Right cardiac atrium (tissue), 5 donors: ENCODE measurements at regions of chr14 and their contacts with region 1.

Region 1: GRCh38 chr14:23446291-23446851 is 10.9 kb upstream of the MYH7 start:
- DNase-seq: peak in 2 of 3 donors; percentile 70 to 80
- ATAC-seq: peak; percentile 54 to 68
- H3K4me3 ChIP-seq: no peak overlapping the region
- H3K27ac ChIP-seq: peak overlapping the region; percentile 69
- H3K4me1 ChIP-seq: peaks cover 2% of the 10 kb centered on the region
- H3K27me3 ChIP-seq: no peaks in the 10 kb centered on the region

Region 2: DNA sequence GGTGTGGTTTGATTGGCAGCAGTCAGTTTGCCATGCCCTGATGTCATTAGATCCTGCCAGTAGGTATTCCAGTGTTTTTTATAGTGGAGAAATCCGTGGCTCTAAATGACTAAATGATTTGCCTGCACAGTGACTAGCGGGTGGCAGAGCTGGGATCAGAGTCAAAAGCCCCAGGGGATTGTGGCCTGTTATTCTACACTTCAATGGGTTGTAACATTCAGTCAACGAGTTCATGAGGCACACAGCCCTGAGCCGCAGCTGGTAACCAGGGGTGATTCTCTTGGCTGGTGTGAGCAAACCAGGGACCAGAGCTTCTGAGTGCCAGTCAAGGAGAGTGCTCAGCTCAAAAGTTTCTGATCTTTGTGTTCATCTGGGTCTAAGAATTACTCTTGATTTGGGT is 40.1 kb before region 1 on chr14:
- intact Hi-C with region 1: loop called in 2 of 4 experiments (anchors 2 to 5 kb)
- DNase-seq: peak in 1 of 3 donors; percentile 31
- ATAC-seq: no peak
- H3K4me3 ChIP-seq: peak overlapping the region; percentile 37
- H3K27ac ChIP-seq: peak overlapping the region; percentile 85
- H3K4me1 ChIP-seq: no peaks in the 10 kb centered on the region
- H3K27me3 ChIP-seq: no peaks in the 10 kb centered on the region

Region 3: DNA sequence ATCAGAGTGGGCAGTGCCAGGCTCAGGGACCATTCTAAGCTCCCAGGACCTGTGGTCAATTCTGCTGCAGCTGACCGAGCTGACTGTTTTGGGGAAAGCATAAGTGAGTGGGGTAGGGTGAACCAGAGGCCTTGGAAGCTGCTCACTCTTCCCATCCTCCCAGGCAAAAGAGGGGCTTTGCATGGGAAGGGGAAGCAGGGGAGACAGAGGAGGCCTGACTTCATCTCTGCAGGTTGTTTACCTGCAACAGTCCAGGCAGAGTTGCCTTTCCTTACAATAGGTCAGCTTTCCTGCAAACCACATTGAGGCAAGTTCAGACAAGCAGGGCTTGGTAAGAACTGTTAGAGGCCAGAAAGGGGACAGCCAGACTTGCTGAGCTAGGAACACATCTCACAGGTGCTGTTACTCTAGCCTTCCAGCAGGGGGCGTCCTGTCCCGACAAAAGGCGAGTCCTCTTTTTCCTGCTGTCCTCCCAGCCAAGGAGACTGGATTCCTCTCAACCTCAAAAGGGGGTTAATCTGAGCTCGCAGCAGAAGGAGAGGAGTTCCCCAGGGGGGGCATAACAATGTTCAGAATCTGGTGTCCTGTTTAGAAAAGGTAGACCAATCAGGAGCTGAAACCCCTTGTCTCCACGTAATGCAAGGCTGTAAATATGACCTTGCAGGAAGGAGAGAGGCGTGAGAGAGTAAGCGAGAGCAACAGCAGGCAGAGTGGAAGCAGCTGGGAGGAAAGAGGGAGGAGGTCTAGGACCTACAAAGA is 185.5 kb after region 1 on chr14:
- intact Hi-C with region 1: no loop called
- DNase-seq: peak; percentile 68 to 83 (median 79)
- ATAC-seq: peak; percentile 92
- H3K4me3 ChIP-seq: no peak overlapping the region
- H3K27ac ChIP-seq: peak overlapping the region; percentile 10
- H3K4me1 ChIP-seq: peaks cover 2% of the 10 kb centered on the region
- H3K27me3 ChIP-seq: no peaks in the 10 kb centered on the region